ENCODE measurements at regions of chr3 and their contacts with region 1.

Region 1: DNA sequence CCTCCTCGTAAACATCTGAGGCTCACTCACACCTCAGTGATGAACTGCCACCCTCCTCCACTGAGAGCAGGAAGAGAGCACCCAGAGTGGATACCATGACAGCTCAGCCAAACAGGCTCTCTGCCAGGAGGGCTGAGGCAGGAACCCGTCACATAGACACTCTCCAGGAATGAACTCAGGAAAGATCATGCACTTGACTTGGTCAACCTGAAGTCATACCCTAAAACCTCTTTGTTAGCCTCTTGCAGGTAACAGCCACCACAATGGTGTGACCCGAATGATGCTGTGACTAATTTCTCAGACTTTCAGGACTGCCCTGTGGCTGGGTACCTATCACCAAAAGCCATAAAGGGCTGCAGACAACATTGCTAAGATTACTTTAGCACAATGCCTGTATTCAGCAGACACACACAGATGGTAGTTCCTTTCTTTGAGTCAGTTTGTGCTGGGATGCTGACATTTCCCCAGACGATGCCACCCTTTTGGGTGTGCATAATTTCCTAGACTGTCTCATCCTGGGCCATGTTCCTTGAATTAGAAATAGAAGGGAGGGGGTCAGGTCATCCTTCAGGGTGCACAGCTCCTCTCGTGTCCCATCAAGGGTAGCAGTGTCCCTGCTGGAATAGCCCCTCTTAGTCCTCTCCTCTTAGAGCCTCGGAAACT is 30.3 kb downstream of the CX3CR1 start:
- DNase-seq: peak in 1 of 3 donors; percentile 50
- H3K4me3 ChIP-seq: peak overlapping the region in 4 of 7 experiments; percentile 33 to 64 (median 40)
- H3K27ac ChIP-seq: no peak overlapping the region
- H3K4me1 ChIP-seq: peaks cover 18 to 62% (median 51%) of the 10 kb centered on the region in 4 experiments
- H3K27me3 ChIP-seq: no peaks in the 10 kb centered on the region

Region 2: DNA sequence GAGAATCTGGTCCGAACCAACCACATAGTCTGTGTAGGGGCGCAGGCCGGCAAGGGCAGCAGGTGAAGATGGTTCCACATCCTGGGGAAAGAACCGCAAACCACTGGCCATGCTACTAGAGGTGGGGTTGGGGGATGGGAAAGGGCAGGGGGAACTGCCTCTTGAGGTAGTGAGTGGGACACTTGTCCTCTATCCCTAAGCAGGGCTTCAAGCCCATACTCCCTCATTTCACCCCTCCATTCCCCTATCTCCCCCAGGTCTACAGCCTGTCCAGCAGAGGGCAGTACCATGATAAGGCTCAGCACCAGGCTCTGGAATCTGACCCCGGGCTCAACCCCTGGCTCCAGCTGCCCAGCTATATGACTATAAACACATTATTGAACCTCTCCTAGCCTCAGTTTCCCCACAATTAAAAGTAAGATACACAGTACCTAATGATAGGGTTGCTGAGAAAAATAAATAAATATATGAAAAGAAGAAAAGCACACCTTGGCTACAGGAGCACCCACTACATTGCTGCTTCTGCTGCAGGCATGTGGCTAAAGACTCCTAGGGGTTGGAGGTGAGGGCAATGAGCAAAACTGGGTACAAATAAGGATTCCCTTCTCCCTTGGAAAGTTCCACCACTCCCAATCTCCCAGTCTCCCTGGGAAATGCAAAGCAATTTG is 148.4 kb before region 1 on chr3:
- CTCF ChIA-PET with region 1: no interaction called
- POLR2A ChIA-PET with region 1: no interaction called
- DNase-seq: peak; percentile 51 to 68 (median 68)
- H3K4me3 ChIP-seq: no peak overlapping the region
- H3K27ac ChIP-seq: no peak overlapping the region
- H3K4me1 ChIP-seq: peaks cover 0 to 11% (median 7%) of the 10 kb centered on the region in 4 experiments
- H3K27me3 ChIP-seq: no peaks in the 10 kb centered on the region

Region 3: GRCh38 chr3:39216176-39216790 is 33.3 kb before region 1 on chr3:
- CTCF ChIA-PET with region 1: interaction called, 17 read pairs
- POLR2A ChIA-PET with region 1: interaction called, 3 read pairs
- DNase-seq: peak; percentile 61 to 92 (median 87)
- H3K4me3 ChIP-seq: peak overlapping the region in 1 of 7 experiments; percentile 17
- H3K27ac ChIP-seq: no peak overlapping the region
- H3K4me1 ChIP-seq: peaks cover 14 to 51% (median 29%) of the 10 kb centered on the region in 4 experiments
- H3K27me3 ChIP-seq: no peaks in the 10 kb centered on the region

Region 4: GRCh38 chr3:39260957-39261356 is 11.4 kb after region 1 on chr3:
- CTCF ChIA-PET with region 1: interaction called, 15 read pairs
- POLR2A ChIA-PET with region 1: no interaction called
- DNase-seq: peak; percentile 96 to 99 (median 97)
- H3K4me3 ChIP-seq: peak overlapping the region in 1 of 7 experiments; percentile 4
- H3K27ac ChIP-seq: peak overlapping the region in 1 of 2 experiments; percentile 72
- H3K4me1 ChIP-seq: peaks cover 19 to 65% (median 36%) of the 10 kb centered on the region in 4 experiments
- H3K27me3 ChIP-seq: no peaks in the 10 kb centered on the region

Measured in common myeloid progenitor, CD34-positive (primary cell).